ENCODE measurements at regions of chr18 and their contacts with region 1.

Region 1: GRCh38 chr18:41266616-41267015 is 688.4 kb upstream of the PIK3C3 start:
- DNase-seq: no peak
- H3K4me3 ChIP-seq: no peak overlapping the region
- H3K27ac ChIP-seq: no peak overlapping the region
- H3K4me1 ChIP-seq: no peaks in the 10 kb centered on the region
- H3K27me3 ChIP-seq: no peaks in the 10 kb centered on the region
- CTCF ChIP-seq: no peak
- EP300 ChIP-seq: no peak
- POLR2A ChIP-seq: no peak

Region 2: GRCh38 chr18:41206341-41206830 is 60.2 kb before region 1 on chr18:
- intact Hi-C with region 1: no loop called
- DNase-seq: no peak
- H3K4me3 ChIP-seq: no peak overlapping the region
- H3K27ac ChIP-seq: no peak overlapping the region
- H3K4me1 ChIP-seq: no peaks in the 10 kb centered on the region
- H3K27me3 ChIP-seq: no peaks in the 10 kb centered on the region
- CTCF ChIP-seq: no peak
- EP300 ChIP-seq: no peak
- POLR2A ChIP-seq: no peak

Region 3: DNA sequence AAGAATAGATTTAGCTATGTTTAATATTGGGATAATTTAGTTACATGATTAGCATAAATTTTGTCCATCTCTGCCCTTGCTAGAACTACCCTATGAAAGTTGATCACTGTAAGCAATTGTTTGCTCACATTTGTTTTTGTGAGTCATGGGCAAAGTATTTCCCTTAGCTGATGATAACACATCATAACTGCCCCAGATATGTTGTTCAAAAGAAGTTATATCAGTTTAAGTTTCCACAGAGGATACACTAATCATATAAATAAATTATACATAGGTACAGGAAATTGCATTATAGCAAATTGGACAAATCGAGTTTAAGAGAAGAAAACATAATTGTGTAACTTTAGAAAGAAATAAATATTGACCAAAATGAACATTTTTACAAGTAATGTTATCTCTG is 465.3 kb after region 1 on chr18:
- intact Hi-C with region 1: loop called in 1 of 4 experiments (anchors 5 kb)
- DNase-seq: no peak
- H3K4me3 ChIP-seq: no peak overlapping the region
- H3K27ac ChIP-seq: no peak overlapping the region
- H3K4me1 ChIP-seq: no peaks in the 10 kb centered on the region
- H3K27me3 ChIP-seq: no peaks in the 10 kb centered on the region
- CTCF ChIP-seq: no peak
- EP300 ChIP-seq: no peak
- POLR2A ChIP-seq: no peak

Measured in ovary (tissue), 10 donors.